Esophagus muscularis mucosa (tissue), 4 donors: ENCODE measurements at regions of chr15 and their contacts with region 1.

Region 1: DNA sequence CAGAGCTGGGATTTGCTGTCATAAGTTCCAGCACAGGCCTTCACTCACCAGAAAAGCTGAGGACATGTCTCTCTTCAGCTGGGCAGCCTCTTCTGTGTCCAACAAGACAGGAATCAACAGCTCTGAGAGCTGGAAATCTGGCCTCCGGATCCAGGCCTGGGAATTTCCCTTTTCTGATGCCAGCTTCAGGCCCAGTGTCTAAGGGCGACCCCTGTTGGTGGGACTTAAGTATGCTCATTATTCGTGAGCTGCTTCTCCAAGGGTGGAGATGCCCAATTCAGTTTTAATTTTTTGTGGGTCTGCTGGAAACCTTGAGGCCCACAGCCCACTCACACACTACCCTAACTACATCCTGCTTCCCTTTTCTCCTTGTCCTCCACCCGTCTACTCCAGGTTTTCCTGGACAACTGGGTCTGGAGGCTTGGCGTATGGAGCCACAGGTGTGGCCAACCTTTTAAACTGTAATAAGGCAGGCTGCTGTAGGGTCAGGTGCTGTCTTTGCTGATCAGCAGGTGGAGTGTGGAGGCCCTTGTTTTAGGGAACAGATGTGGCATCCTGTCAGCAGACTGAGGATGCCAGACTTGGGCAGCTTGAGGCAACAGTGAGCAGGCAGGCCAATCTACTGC is 2.6 kb upstream of the CEMIP start:
- DNase-seq: peak; percentile 93
- H3K4me3 ChIP-seq: no peak overlapping the region
- H3K27ac ChIP-seq: no peak overlapping the region
- H3K4me1 ChIP-seq: peaks cover 27 to 38% (median 32%) of the 10 kb centered on the region in 4 donors
- H3K27me3 ChIP-seq: peaks cover 0 to 36% (median 18%) of the 10 kb centered on the region in 4 donors
- CTCF ChIP-seq: peak; percentile 81 to 87 (median 84)
- EP300 ChIP-seq: no peak
- POLR2A ChIP-seq: no peak

Region 2: GRCh38 chr15:80567721-80568157 is 208.8 kb before region 1 on chr15:
- intact Hi-C with region 1: loop called (anchors 2 kb)
- DNase-seq: no peak
- H3K4me3 ChIP-seq: no peak overlapping the region
- H3K27ac ChIP-seq: no peak overlapping the region
- H3K4me1 ChIP-seq: peaks cover 0 to 12% (median 8%) of the 10 kb centered on the region in 4 donors
- H3K27me3 ChIP-seq: no peaks in the 10 kb centered on the region
- CTCF ChIP-seq: peak; percentile 62 to 73 (median 62)
- EP300 ChIP-seq: no peak
- POLR2A ChIP-seq: no peak

Region 3: GRCh38 chr15:80615761-80616391 is 160.7 kb before region 1 on chr15:
- intact Hi-C with region 1: loop called (anchors 2 kb)
- DNase-seq: peak; percentile 92
- H3K4me3 ChIP-seq: no peak overlapping the region
- H3K27ac ChIP-seq: peak overlapping the region in 3 of 4 donors; percentile 32 to 58 (median 44)
- H3K4me1 ChIP-seq: peaks cover 9 to 23% (median 13%) of the 10 kb centered on the region in 4 donors
- H3K27me3 ChIP-seq: no peaks in the 10 kb centered on the region
- CTCF ChIP-seq: no peak
- EP300 ChIP-seq: no peak
- POLR2A ChIP-seq: no peak

Region 4: DNA sequence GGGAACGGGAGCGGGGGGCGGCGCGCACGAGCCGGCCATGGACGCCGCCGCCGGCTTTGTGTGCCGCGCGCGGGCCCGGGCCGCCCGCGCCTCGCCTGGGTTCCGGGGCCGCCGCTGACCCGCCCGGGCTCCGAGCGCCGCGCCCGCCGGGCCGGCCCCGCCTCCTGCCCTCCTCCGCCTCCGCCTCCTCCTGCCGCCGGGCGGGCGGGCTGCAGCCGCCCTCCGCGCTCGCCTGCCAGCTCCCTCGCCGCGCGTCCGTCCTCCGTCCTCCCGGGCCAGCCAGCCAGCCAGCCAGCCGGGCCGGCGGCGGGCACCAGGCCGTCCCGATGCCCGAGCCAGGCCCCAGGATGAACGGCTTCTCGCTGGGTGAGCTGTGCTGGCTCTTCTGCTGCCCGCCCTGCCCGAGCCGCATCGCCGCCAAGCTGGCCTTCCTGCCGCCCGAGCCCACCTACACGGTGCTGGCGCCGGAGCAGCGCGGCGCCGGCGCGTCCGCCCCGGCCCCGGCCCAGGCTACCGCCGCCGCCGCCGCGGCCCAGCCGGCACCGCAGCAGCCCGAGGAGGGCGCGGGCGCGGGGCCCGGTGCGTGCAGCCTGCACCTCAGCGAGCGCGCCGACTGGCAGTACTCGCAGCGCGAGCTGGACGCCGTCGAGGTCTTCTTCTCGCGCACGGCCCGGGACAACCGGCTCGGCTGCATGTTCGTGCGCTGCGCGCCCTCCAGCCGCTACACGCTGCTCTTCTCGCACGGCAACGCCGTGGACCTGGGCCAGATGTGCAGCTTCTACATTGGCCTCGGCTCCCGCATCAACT is 81.2 kb before region 1 on chr15 and contains the start of gene ABHD17C:
- intact Hi-C with region 1: loop called (anchors 2 kb)
- DNase-seq: no peak
- H3K4me3 ChIP-seq: peak within 1 kb of the TSS; percentile 73 to 92 (median 84)
- H3K27ac ChIP-seq: peak within 1 kb of the TSS; percentile 86 to 92 (median 89)
- H3K4me1 ChIP-seq: peaks cover 14 to 36% (median 28%) of the 10 kb centered on the region in 4 donors
- H3K27me3 ChIP-seq: no peaks in the 10 kb centered on the region
- CTCF ChIP-seq: no peak
- EP300 ChIP-seq: no peak
- POLR2A ChIP-seq: no peak
- total RNA-seq, gene ABHD17C: 1.5 to 7.1 (median 3.5) TPM

Region 5: GRCh38 chr15:80893777-80894176 is 117.2 kb after region 1 on chr15:
- intact Hi-C with region 1: no loop called
- DNase-seq: no peak
- H3K4me3 ChIP-seq: no peak overlapping the region
- H3K27ac ChIP-seq: no peak overlapping the region
- H3K4me1 ChIP-seq: no peaks in the 10 kb centered on the region
- H3K27me3 ChIP-seq: no peaks in the 10 kb centered on the region
- CTCF ChIP-seq: no peak
- EP300 ChIP-seq: no peak
- POLR2A ChIP-seq: no peak

Region 6: DNA sequence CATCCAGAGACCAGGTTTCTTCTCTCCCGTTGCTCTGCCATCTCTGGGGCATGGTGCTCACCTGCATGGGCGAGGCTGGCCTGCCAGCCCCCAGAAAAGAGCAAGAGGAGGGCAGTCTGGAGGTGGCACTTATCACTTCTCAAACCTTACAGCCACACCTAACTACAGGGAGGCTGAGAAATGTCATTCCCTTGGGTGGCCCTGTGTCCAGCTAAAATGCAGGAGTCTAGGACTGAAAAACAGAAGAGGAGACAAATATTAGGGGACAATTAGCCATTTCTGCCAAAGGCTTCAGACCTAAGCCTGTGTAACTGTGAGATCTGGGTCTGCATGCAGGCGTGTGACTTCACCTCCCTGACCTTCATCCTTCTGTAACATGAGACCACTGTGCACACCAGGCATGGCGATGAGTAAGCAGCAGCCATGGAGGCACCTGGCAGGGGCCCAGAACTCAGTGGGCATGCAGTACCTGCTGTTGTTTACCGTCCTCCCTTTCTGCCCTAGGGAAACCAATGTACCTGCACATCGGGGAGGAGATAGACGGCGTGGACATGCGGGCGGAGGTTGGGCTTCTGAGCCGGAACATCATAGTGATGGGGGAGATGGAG is 129.7 kb after region 1 on chr15:
- intact Hi-C with region 1: no loop called
- DNase-seq: no peak
- H3K4me3 ChIP-seq: no peak overlapping the region
- H3K27ac ChIP-seq: no peak overlapping the region
- H3K4me1 ChIP-seq: no peaks in the 10 kb centered on the region
- H3K27me3 ChIP-seq: no peaks in the 10 kb centered on the region
- CTCF ChIP-seq: no peak
- EP300 ChIP-seq: no peak
- POLR2A ChIP-seq: no peak

Region 7: DNA sequence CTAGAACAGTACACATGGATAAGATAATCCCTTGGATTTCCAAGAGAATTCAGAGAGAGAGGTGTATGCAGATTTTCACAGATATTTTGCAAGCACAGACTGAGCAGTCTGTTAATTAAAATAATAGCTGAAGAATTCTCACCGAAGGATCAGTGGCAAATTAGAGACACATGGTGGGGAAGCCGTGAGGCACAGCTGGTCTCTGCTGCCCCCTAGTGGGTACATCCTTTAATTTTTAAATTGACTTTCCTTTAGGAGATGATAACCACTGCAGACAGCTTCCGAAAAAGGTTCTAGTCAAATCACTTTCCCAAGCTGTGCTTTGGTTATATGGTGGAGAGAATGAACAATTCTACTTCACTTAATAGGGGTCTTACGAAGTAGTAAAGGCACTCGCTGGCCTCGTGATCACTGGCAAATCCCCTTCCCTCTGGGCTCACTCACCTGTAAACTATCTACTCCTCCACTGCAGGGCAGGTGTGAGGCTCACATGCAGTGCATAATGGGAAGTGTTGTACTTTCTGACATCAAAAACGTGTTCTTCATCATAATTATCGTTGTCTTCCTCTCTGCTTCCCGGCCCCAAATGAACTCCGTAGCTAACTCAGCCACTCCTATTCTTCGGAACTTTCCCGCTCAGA is 193.6 kb after region 1 on chr15:
- intact Hi-C with region 1: loop called (anchors 2 kb)
- DNase-seq: no peak
- H3K4me3 ChIP-seq: no peak overlapping the region
- H3K27ac ChIP-seq: no peak overlapping the region
- H3K4me1 ChIP-seq: peaks cover 4 to 19% (median 15%) of the 10 kb centered on the region in 4 donors
- H3K27me3 ChIP-seq: no peaks in the 10 kb centered on the region
- CTCF ChIP-seq: peak; percentile 76 to 88 (median 86)
- EP300 ChIP-seq: no peak
- POLR2A ChIP-seq: no peak

Region 8: DNA sequence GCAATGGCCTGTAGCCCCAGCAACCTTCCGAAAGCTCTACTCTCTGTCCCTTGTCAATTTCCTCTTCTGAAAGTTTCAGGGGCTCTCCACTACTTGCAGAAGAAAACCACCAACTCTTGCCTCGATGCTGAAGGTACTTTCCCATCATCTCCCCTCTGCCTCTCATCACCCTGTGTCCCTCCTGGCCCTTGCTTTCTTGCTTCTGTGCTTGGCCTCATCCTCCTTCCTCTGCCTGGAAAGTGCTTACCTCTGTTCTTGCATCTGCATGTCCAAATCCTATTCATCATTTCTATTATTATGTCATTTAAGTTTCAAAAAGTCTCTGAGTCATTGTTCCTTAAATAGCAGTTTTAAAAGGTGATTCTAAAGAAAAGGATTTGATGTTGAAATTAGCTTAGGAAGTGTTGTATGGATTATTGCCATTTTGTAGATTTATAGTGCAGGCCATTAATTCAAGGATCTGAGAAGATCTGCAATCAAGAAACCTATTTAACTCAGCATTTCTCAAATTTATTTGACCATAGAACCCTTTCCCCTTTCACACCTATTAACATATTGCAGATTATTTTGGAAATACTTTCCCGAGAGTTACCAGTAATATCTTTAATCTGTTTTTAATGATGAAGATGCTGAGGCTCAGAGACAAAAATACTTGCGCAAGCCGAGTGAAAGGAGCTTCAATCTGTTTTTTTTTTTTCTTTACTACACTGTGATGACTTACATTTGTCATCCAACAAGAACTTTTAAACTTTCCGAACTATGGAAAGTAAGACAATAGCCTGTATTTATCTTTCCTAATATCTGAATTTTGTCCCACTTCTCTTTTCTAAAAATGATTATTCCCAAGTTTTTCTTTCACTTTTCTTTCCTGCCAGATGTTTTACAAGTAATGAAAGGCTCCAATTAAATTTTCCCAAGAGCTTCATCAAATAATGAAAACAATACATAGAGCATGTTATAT is 335.3 kb after region 1 on chr15:
- intact Hi-C with region 1: no loop called
- DNase-seq: no peak
- H3K4me3 ChIP-seq: no peak overlapping the region
- H3K27ac ChIP-seq: no peak overlapping the region
- H3K4me1 ChIP-seq: peaks cover 0 to 7% (median under 1%) of the 10 kb centered on the region in 4 donors
- H3K27me3 ChIP-seq: peaks cover 0 to 8% (median 0%) of the 10 kb centered on the region in 4 donors
- CTCF ChIP-seq: no peak
- EP300 ChIP-seq: no peak
- POLR2A ChIP-seq: no peak

Region 9: GRCh38 chr15:81685237-81685636 is 908.7 kb after region 1 on chr15:
- intact Hi-C with region 1: no loop called
- DNase-seq: no peak
- H3K4me3 ChIP-seq: no peak overlapping the region
- H3K27ac ChIP-seq: no peak overlapping the region
- H3K4me1 ChIP-seq: no peaks in the 10 kb centered on the region
- H3K27me3 ChIP-seq: no peaks in the 10 kb centered on the region
- CTCF ChIP-seq: no peak
- EP300 ChIP-seq: no peak
- POLR2A ChIP-seq: no peak